MCF 10A (cell line): ENCODE measurements at regions of chr4 and their contacts with region 1.

Region 1: GRCh38 chr4:48340965-48341775 is at the start of gene SLAIN2:
- DNase-seq: peak; percentile 96
- H3K4me3 Mint-ChIP-seq: peak within 1 kb of the TSS; percentile 98
- H3K27ac Mint-ChIP-seq: peak within 1 kb of the TSS; percentile 97
- H3K4me1 Mint-ChIP-seq: peaks cover 53% of the 10 kb centered on the region
- H3K27me3 Mint-ChIP-seq: no peaks in the 10 kb centered on the region
- CTCF ChIP-seq: no peak
- total RNA-seq, gene SLAIN2: 74.0 and 81.6 TPM in 2 replicates

Region 2: DNA sequence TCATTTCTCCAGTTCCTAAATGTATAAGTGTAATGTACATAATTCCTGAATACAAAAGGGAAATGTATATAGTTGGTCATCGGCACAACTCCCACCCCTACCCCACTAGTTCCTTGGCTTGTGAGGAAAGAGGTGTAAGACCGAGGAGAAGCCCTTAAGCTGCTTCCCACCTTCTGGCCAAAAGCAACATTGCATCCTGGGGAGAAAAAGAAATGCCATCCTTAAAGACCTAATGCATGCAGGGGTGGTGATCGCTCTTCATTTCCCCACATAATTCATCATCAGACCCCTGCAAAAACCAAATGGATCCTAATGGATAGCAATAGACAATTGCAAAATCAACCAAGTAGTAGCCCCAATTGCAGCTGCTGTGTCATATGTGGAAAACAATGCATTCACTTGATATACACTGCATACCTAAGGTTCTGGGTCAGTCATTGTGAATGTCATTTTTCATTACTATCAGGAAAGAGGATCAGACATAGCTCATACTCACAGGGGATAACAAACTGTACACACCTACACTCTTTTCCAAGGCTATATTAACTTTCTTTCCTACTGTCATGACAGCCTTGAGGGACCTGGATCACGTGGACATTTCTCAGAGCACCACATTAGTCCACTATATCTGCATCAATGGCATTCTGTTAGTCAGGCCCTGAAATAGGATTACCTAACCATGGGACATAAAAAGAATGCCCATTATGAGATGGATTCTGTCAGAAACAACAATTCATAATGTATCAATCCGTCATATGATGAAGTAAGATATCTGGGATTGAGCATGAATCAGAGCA is 395.0 kb before region 1 on chr4:
- CTCF ChIA-PET with region 1: no interaction called
- POLR2A ChIA-PET with region 1: no interaction called
- intact Hi-C with region 1: no loop called
- DNase-seq: no peak
- H3K4me3 Mint-ChIP-seq: no peak overlapping the region
- H3K27ac Mint-ChIP-seq: no peak overlapping the region
- H3K4me1 Mint-ChIP-seq: no peaks in the 10 kb centered on the region
- H3K27me3 Mint-ChIP-seq: no peaks in the 10 kb centered on the region
- CTCF ChIP-seq: no peak

Region 3: GRCh38 chr4:48315728-48316630 is 25.2 kb before region 1 on chr4:
- CTCF ChIA-PET with region 1: interaction called, 8 read pairs
- POLR2A ChIA-PET with region 1: interaction called, 3 read pairs
- intact Hi-C with region 1: loop called (anchors 1 kb)
- DNase-seq: peak; percentile 79
- H3K4me3 Mint-ChIP-seq: no peak overlapping the region
- H3K27ac Mint-ChIP-seq: no peak overlapping the region
- H3K4me1 Mint-ChIP-seq: no peaks in the 10 kb centered on the region
- H3K27me3 Mint-ChIP-seq: no peaks in the 10 kb centered on the region
- CTCF ChIP-seq: peak; percentile 73

Region 4: DNA sequence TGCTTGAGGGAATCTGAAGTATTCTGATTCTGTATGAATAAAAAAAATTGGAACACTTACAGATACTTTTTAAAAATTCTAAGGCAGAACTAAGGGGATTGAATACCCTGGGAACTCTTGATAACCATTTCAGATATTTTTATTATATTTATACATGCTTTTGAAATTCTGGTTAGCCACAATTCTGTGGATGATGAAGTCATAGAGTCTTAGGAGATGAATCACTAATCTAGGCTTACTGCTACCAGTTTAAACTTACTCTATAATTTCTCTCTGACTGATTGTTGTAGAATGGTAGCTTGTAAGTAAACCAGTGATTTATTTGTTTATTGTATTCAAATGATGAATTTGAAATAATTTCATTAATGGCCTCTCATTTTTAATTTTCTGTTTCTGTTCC is 11.2 kb before region 1 on chr4:
- CTCF ChIA-PET with region 1: interaction called, 6 read pairs
- POLR2A ChIA-PET with region 1: interaction called, 49 read pairs
- intact Hi-C with region 1: no loop called
- DNase-seq: peak; percentile 53
- H3K4me3 Mint-ChIP-seq: no peak overlapping the region
- H3K27ac Mint-ChIP-seq: peak overlapping the region; percentile 58
- H3K4me1 Mint-ChIP-seq: peaks cover 42% of the 10 kb centered on the region
- H3K27me3 Mint-ChIP-seq: no peaks in the 10 kb centered on the region
- CTCF ChIP-seq: no peak

Region 5: DNA sequence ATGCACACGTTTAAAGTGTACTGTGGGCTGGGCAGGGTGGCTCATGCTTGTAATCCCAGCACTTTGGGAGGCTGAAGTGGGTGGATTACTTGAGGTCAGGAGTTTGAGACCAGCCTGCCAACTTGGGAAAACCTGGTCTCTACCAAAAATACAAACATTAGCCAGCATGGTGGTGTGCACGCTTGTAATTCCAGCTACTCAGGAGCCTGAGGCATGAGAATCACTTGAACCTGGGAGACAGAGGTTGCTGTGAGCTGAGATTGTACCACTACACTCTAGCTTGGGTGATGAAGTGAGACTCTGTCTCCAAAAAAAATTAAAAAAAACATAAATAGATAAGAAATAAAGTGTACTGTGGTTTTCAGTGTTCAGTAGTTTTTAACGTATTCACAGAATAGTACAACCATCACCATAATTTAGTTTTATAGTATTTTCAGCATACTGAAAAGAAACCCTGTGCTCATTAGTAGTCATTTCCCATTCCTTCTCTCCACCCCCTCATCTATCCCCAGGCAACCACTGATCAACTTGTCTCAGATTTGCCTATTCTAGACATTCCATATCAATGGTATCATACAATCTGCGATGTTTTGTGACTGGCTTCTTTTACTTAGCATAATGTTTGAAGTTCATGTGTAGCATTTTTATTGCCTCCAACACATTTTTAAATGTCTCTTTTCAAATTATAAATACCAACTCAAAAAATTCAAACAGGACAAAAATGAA is 19.3 kb after region 1 on chr4:
- CTCF ChIA-PET with region 1: interaction called, 7 read pairs
- POLR2A ChIA-PET with region 1: interaction called, 32 read pairs
- intact Hi-C with region 1: no loop called
- DNase-seq: peak; percentile 59
- H3K4me3 Mint-ChIP-seq: peak overlapping the region; percentile 38
- H3K27ac Mint-ChIP-seq: peak overlapping the region; percentile 82
- H3K4me1 Mint-ChIP-seq: peaks cover 24% of the 10 kb centered on the region
- H3K27me3 Mint-ChIP-seq: no peaks in the 10 kb centered on the region
- CTCF ChIP-seq: no peak

Region 6: GRCh38 chr4:48370260-48371134 is 29.3 kb after region 1 on chr4:
- CTCF ChIA-PET with region 1: interaction called, 3 read pairs
- POLR2A ChIA-PET with region 1: interaction called, 32 read pairs
- intact Hi-C with region 1: no loop called
- DNase-seq: no peak
- H3K4me3 Mint-ChIP-seq: no peak overlapping the region
- H3K27ac Mint-ChIP-seq: no peak overlapping the region
- H3K4me1 Mint-ChIP-seq: peaks cover 42% of the 10 kb centered on the region
- H3K27me3 Mint-ChIP-seq: no peaks in the 10 kb centered on the region
- CTCF ChIP-seq: no peak

Region 7: DNA sequence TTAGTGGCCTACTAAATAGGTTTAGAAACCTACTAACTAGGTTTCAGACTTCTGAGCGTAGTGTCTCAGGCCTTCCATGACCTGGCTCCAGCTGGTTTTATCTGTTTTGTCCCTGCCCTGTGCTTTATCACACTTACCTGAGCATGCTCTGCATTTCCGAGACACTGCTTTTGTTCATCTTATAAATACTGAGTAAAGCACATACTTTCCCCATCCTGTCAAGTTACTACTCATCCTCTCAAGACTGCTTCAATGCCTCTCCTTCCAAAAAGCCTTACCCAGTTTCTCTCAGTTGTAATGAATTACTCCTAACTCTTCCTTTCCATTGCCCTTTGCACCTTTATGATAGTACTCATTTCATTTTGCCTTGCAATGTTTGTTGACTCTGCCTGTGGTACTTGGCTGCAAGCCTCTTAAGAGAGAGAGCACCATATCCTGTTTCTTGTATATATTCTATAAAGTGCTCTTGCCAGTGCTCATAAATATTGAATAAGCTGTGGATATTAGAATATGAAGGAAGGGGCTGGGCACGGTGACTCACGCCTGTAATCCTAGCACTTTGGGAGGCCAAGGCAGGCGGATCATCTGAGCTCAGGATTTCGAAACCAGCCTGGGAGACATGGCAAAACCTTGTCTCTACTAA is 34.6 kb after region 1 on chr4:
- CTCF ChIA-PET with region 1: interaction called, 3 read pairs
- POLR2A ChIA-PET with region 1: interaction called, 32 read pairs
- intact Hi-C with region 1: loop called (anchors 2 kb)
- DNase-seq: peak; percentile 93
- H3K4me3 Mint-ChIP-seq: peak overlapping the region; percentile 1
- H3K27ac Mint-ChIP-seq: peak overlapping the region; percentile 49
- H3K4me1 Mint-ChIP-seq: peaks cover 36% of the 10 kb centered on the region
- H3K27me3 Mint-ChIP-seq: no peaks in the 10 kb centered on the region
- CTCF ChIP-seq: no peak